PC-3 (cell line): ENCODE measurements at regions of chr5 and their contacts with region 1.

Region 1: GRCh38 chr5:133032852-133033742 is 6.7 kb upstream of the ZCCHC10 start:
- DNase-seq: no peak
- ATAC-seq: no peak
- H3K4me3 ChIP-seq: no peak overlapping the region
- H3K27ac ChIP-seq: no peak overlapping the region
- H3K4me1 ChIP-seq: no peaks in the 10 kb centered on the region
- H3K27me3 ChIP-seq: no peaks in the 10 kb centered on the region
- CTCF ChIP-seq: no peak

Region 2: DNA sequence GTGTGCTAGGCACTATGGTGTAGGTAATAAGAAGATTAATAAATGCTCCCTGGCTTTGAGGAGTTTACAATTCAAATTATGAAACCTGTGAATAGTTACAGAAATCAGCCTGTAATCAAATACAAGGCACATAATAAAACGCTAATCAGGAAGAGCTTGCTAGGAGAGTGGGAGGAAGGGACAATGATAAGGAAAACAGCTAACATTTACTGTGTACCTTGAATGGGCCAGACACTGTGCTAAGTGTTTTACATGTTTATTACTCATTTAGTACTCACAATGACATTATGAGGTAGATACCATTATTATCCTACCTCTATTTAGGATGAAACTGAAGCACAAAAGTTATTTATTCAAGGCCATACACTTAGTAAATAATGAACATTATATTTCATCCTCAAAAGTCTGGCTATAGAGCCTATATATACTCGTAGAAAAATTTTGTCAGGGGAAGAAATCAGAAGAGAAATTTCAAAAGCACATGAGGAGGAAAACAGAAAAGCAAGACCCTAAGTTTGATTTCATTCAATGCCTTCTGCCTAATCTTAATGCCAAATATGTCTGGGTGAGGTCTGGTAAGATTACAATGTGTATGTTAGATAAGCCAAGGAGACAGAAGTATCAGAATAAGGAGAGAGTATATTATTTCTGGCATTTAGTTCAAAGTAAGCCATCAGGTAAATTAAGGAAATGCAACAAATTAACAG is 105.6 kb before region 1 on chr5:
- CTCF ChIA-PET with region 1: no interaction called
- POLR2A ChIA-PET with region 1: no interaction called
- intact Hi-C with region 1: loop called (anchors 5 kb)
- DNase-seq: no peak
- ATAC-seq: no peak
- H3K4me3 ChIP-seq: no peak overlapping the region
- H3K27ac ChIP-seq: no peak overlapping the region
- H3K4me1 ChIP-seq: no peaks in the 10 kb centered on the region
- H3K27me3 ChIP-seq: no peaks in the 10 kb centered on the region
- CTCF ChIP-seq: no peak

Region 3: DNA sequence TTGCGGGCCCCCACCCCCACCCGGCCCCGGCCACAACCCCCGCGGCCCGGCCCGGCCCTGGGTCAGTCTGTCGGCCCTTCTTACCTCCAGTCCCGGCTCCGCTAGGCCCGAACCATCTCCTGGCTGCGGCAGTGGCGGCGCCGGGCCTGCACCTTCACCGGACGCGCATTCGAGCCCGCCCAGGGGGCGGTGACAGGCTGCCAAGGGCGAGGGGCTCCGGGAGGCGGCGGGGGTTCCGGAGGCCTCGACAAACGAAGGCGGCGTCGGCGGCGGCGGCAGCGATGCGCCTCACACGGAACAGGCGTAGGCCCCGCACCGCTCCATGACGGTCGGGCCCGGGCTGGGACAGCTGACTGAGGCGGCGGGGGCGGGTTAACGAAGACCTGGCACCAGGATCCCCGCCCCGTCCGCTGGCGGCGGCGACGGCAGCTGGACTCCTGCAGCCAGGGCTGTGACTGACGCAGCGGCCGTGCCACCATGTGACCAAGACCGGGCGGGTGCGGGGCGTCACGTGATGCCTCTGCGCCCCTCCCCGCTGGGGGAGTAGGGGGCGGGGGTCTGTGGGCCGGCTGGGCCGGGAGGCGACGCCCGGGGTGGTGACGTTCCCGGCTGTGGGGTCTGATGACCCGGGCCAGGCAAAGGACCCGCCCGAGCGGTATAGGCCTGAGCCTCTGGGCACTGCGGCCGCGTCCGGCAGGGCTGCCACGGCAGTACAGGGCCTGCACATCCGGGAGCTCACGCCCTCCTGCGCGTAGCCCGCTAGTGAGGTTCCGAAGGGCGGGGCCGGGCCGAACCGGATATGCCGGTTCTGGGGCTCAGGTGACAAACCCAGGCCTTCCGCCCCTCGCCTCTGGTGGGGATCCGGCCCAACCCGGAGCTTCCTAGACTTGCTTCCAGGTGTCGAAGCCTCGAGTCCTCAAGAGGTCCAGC is 69.7 kb before region 1 on chr5 and contains the start of gene AFF4:
- CTCF ChIA-PET with region 1: no interaction called
- POLR2A ChIA-PET with region 1: interaction called, 33 read pairs
- intact Hi-C with region 1: no loop called
- DNase-seq: peak; percentile 87
- ATAC-seq: peak; percentile 93
- H3K4me3 ChIP-seq: peak within 1 kb of the TSS; percentile 73
- H3K27ac ChIP-seq: peak within 1 kb of the TSS; percentile 80
- H3K4me1 ChIP-seq: peaks cover 9% of the 10 kb centered on the region
- H3K27me3 ChIP-seq: no peaks in the 10 kb centered on the region
- CTCF ChIP-seq: no peak
- total RNA-seq, gene AFF4: 20.7 and 23.5 TPM in 2 replicates

Region 4: DNA sequence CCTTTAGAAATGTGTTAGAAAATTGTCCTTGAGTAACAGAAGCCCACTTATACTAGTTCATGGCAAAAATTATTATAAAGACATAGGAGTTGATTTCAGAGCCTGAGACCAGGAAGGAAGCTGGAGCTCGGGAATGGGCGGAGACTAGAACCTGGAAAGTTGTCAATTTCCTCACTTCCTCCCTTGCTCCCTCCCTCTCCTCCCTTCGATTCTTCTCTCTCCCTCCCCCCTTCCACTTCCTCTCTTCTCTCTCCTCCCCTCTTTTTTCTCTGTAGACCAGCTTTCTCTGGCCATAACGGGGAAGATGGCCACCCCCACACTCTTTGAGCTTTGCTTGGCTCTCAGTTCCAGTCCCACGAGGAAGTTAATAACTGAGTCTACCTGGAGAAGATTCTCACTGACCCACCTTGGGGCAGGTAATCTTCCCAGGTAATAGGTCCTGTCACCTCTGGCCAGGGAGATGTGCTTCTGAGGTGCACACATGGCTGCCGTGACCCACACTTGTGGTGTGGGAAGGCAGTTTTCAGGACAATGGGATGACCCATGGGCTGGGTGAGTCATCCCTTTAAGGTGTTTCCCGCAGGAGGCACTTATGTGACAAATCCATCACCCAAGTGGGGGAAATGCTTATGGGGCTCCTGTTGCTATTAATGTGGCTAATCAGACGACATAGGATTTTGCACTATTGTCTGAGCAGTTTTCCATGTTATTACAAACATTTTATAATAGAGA is 97.5 kb after region 1 on chr5:
- CTCF ChIA-PET with region 1: no interaction called
- POLR2A ChIA-PET with region 1: no interaction called
- intact Hi-C with region 1: no loop called
- DNase-seq: peak; percentile 47
- ATAC-seq: peak; percentile 33; the same call in 1 of the 2 replicates
- H3K4me3 ChIP-seq: no peak overlapping the region
- H3K27ac ChIP-seq: no peak overlapping the region
- H3K4me1 ChIP-seq: peaks cover 5% of the 10 kb centered on the region; the same call in 1 of the 2 replicates
- H3K27me3 ChIP-seq: no peaks in the 10 kb centered on the region
- CTCF ChIP-seq: no peak